Posterior vena cava (tissue), 2 donors: ENCODE measurements at regions of chr1 and their contacts with region 1.

Region 1: GRCh38 chr1:52601991-52602855 is at the start of gene GPX7:
- DNase-seq: peak; percentile 85
- total RNA-seq, gene GPX7: 8.1 to 12.1 TPM

Region 2: DNA sequence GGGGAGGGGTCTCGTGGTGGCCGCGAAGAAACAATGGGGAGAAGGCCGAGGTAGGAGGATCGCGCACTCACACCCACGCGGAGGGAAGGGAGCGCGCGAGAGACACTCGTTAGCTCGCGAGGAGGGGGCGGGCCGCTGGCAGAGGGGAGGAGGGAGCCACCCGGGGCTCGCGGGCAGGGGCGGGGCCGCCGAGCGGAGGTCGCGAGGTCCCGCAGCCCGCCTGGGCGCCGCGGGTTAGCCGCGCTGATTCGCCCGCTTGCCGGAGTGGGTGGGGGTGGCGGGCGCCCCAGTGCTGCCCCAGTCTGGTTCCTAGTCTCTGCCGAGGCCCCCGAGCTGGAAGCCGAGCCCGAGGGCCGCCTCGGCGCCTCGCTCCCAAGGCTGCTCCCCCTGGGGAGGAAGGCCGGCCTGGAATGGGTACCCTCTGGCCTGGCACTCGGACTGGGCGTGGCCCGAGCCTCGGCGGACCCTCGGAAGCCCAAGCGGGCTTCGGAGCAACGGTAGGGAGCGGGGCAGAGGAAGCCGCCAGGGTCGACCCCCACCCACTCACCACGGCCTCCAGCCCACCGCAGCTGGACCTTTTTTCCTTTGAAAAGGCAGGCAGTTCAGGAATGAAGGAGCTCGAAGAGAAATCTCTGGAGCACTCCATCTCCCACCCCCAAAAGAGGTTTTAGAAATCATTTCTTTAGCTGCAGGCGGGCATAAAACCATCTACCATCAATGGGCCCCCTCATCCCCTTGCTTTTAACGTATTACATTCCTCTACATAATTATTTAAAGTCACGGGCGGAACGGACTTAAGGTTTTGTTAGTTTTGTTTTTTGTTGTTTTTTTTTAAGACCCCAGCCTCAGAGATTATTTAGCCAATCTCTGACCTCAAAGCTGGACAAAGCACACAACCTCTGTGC is 48.6 kb before region 1 on chr1:
- intact Hi-C with region 1: loop called in 1 of 2 experiments (anchors 2 kb)
- DNase-seq: peak; percentile 94